Activated CD8-positive, alpha-beta T cell treated with anti-CD3 and anti-CD28 coated beads, Interleukin-2, amount 10 ng/mL, durations not matched to agents 7 days and 5 days (primary cell): ENCODE measurements at regions of chr15 and their contacts with region 1.

Region 1: GRCh38 chr15:42084460-42085235 is 9.7 kb downstream of the PLA2G4D start:
- DNase-seq: peak; percentile 54
- ATAC-seq: peak; percentile 76
- H3K4me3 Mint-ChIP-seq: no peak overlapping the region
- H3K27ac Mint-ChIP-seq: no peak overlapping the region
- H3K4me1 Mint-ChIP-seq: peaks cover 12% of the 10 kb centered on the region
- H3K27me3 Mint-ChIP-seq: no peaks in the 10 kb centered on the region

Region 2: DNA sequence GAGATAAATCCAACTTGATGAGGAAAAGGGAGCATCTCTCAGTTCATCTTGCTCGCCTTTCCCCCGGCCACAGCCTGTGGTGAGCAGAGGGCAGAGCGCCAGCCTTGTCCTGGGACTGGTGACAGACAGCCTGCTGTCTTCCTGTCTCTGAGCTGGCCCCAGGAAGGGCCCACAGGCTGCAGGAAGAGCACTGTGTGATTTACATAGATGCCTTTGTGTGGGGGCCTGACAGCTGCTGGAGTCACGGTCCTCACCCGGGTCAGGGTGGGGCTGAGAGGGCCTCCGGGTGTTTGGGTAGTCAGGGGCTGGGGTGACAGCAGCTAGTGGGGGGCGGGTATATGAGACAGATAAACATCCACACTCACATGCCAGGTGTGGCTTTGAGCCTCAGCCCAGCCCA is 19.6 kb before region 1 on chr15:
- CTCF ChIA-PET with region 1: interaction called, 15 read pairs
- POLR2A ChIA-PET with region 1: no interaction called
- DNase-seq: no peak
- ATAC-seq: peak; percentile 54
- H3K4me3 Mint-ChIP-seq: no peak overlapping the region
- H3K27ac Mint-ChIP-seq: no peak overlapping the region
- H3K4me1 Mint-ChIP-seq: peaks cover 6% of the 10 kb centered on the region
- H3K27me3 Mint-ChIP-seq: peaks cover 16% of the 10 kb centered on the region

Region 3: DNA sequence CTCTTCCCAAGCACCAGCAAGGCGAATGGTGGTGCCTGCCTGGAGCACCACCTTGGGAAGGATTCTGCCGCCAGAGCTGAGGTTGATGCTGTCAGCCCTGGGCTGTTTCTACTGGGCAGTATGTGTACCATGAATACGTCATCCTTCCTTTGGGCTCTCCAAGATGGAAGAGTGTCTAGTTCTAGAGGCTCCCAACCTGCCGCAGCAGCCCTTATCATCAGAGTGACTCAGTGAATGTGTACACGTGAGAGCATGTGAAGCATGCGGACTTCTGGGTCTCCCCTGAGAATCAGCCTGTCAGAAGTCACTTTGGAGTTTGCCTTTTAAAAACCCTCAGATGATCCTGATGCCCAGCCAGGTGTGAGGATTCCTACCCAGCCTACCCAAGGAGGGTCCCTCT is 11.2 kb before region 1 on chr15:
- CTCF ChIA-PET with region 1: interaction called, 14 read pairs
- POLR2A ChIA-PET with region 1: no interaction called
- DNase-seq: no peak
- ATAC-seq: no peak
- H3K4me3 Mint-ChIP-seq: no peak overlapping the region
- H3K27ac Mint-ChIP-seq: no peak overlapping the region
- H3K4me1 Mint-ChIP-seq: no peaks in the 10 kb centered on the region
- H3K27me3 Mint-ChIP-seq: peaks cover 5% of the 10 kb centered on the region

Region 4: GRCh38 chr15:42226648-42227047 is 142.0 kb after region 1 on chr15:
- CTCF ChIA-PET with region 1: no interaction called
- POLR2A ChIA-PET with region 1: no interaction called
- DNase-seq: no peak
- ATAC-seq: no peak
- H3K4me3 Mint-ChIP-seq: no peak overlapping the region
- H3K27ac Mint-ChIP-seq: no peak overlapping the region
- H3K4me1 Mint-ChIP-seq: no peaks in the 10 kb centered on the region
- H3K27me3 Mint-ChIP-seq: no peaks in the 10 kb centered on the region